Naive thymus-derived CD8-positive, alpha-beta T cell (primary cell): ENCODE measurements at regions of chr11 and their contacts with region 1.

Region 1: DNA sequence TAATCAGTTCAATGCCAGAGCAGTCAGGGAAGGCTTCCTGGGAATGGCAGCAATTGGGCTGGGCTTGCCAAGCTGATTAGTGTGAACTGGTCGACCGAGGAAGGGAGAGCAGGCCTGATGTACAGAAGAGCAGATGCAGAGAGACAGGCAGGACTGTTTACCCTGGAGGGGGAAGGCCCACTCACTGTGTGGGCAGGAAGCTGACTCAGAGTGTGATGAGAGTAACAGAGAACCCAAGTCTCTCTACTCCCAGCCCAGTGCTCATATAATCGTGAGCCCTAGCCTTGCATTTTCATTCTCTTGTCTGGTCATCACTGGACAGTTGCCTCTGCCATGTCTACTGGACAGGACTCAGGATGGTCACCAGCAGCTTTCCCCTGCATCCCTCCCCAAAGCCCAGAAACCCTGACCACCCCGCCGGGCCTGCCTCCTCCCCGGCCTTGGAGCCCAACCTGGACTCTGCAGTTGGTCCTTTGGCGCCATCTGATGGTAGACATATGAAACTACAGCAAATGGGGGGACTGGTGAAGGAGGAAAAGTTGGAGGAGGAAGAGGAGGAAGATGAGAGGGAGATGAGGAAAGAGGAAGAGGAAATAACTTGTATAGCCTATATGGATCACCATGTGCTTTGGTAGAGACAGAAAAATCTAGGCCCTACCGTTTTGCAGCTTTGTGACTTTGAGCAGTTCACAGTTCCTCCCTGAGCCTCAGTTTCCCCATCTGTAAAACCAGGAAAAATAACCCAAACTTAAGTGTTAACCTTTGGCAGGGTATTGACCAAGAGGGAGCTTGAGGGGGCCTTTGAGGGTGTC is 43.4 kb upstream of the PRDM11 start:
- DNase-seq: peak in 9 of 10 donors; percentile 30 to 83 (median 52)
- ATAC-seq: peak; percentile 79 to 98
- H3K4me3 Mint-ChIP-seq: peak overlapping the region in 9 of 10 donors; percentile 26 to 77 (median 64)
- H3K27ac Mint-ChIP-seq: peak overlapping the region in 7 of 10 donors; percentile 1 to 88 (median 81)
- H3K4me1 Mint-ChIP-seq: peaks cover 12 to 34% (median 25%) of the 10 kb centered on the region in 4 donors
- H3K27me3 Mint-ChIP-seq: peaks cover 0 to 8% (median 6%) of the 10 kb centered on the region in 5 donors

Region 2: DNA sequence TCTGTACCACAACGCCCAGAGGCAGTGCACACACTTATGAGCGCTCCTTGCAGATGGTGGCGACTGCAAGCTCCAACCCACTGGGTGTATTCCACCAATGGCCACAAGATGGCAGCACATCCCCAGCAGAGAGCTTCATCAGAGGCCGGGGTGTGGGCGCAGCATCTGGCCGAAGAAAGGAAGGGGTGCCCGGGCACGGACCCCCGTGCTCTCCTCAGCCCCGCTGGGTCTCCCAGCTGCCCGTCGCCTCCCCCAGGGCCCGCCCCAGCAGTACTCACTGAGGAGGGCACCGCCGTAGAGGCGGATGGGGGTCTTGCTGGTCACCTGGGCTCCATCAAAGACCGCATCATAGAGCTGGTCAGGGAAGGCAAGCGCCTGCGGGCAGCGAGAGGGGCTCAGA is 166.5 kb before region 1 on chr11:
- POLR2A ChIA-PET with region 1: interaction called, 41 read pairs
- DNase-seq: peak; percentile 59 to 87 (median 76)
- ATAC-seq: peak; percentile 82 to 92
- H3K4me3 Mint-ChIP-seq: no peak overlapping the region
- H3K27ac Mint-ChIP-seq: no peak overlapping the region
- H3K4me1 Mint-ChIP-seq: peaks cover 0 to 19% (median 0%) of the 10 kb centered on the region in 4 donors
- H3K27me3 Mint-ChIP-seq: no peaks in the 10 kb centered on the region